Dendritic cell treated with granulocyte-macrophage colony-stimulating factor and Interleukin-4, amounts not matched to agents 40 ng/mL and 50 ng/mL, for 4 days (primary cell): ENCODE measurements at regions of chr17 and their contacts with region 1.

Region 1: GRCh38 chr17:28967221-28968140 is 16.2 kb upstream of the PHF12 start:
- H3K4me3 Mint-ChIP-seq: no peak overlapping the region
- H3K27ac Mint-ChIP-seq: peak overlapping the region; percentile 81
- H3K4me1 Mint-ChIP-seq: peaks cover 54% of the 10 kb centered on the region
- H3K27me3 Mint-ChIP-seq: peaks cover 28% of the 10 kb centered on the region

Region 2: DNA sequence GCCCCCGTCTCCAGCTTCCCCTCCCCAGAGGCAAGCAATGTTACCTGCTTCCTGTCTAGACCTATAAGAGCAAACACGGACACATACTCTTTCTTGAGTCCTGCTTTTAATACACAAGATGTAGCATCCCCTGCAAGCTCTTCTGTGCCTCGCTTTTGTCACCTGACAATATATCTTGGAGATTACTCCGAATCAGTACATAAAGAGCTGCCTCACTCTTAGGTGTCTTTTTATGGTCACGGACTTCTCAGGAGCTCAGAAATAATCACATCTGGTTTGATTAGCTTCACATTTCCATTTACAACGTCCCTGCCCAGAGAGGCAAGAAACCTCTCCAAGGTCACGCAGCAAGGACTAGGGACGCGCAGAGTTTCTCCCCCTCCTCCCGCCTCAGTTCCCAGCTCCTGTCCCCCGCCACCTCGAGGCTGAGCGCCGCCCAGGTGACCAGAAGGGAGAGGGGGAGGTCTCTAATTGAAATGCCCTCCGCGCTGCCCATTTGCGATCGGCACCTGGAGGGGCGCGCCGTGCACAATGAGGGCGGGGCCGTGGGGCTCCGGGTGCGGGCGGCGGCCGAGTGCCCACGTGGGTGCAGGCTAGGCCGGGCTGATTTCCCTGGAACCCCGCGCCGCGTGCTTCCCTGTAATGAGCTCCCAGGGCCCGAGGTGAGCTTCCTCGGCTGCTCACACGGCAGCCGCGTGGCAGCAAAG is 52.1 kb after region 1 on chr17:
- intact Hi-C with region 1: no loop called
- H3K4me3 Mint-ChIP-seq: no peak overlapping the region
- H3K27ac Mint-ChIP-seq: no peak overlapping the region
- H3K4me1 Mint-ChIP-seq: peaks cover 40% of the 10 kb centered on the region
- H3K27me3 Mint-ChIP-seq: peaks cover 85% of the 10 kb centered on the region

Region 3: GRCh38 chr17:29111816-29112499 is 144.5 kb after region 1 on chr17:
- intact Hi-C with region 1: loop called (anchors 1 kb)
- H3K4me3 Mint-ChIP-seq: peak overlapping the region; percentile 28
- H3K27ac Mint-ChIP-seq: peak overlapping the region; percentile 80
- H3K4me1 Mint-ChIP-seq: peaks cover 97% of the 10 kb centered on the region
- H3K27me3 Mint-ChIP-seq: no peaks in the 10 kb centered on the region

Region 4: GRCh38 chr17:29116804-29117772 is 149.6 kb after region 1 on chr17:
- intact Hi-C with region 1: loop called (anchors 1 kb)
- H3K4me3 Mint-ChIP-seq: peak overlapping the region; percentile 52
- H3K27ac Mint-ChIP-seq: peak overlapping the region; percentile 61
- H3K4me1 Mint-ChIP-seq: peaks cover 56% of the 10 kb centered on the region
- H3K27me3 Mint-ChIP-seq: no peaks in the 10 kb centered on the region